ENCODE measurements at regions of chr12 and their contacts with region 1.

Region 1: GRCh38 chr12:123983822-123984485 is 10.9 kb downstream of the ZNF664 start:
- DNase-seq: no peak
- ATAC-seq: peak; percentile 66
- H3K4me3 Mint-ChIP-seq: no peak overlapping the region
- H3K27ac Mint-ChIP-seq: no peak overlapping the region
- H3K4me1 Mint-ChIP-seq: peaks cover 21% of the 10 kb centered on the region
- H3K27me3 Mint-ChIP-seq: no peaks in the 10 kb centered on the region
- CTCF ChIP-seq: no peak

Region 2: DNA sequence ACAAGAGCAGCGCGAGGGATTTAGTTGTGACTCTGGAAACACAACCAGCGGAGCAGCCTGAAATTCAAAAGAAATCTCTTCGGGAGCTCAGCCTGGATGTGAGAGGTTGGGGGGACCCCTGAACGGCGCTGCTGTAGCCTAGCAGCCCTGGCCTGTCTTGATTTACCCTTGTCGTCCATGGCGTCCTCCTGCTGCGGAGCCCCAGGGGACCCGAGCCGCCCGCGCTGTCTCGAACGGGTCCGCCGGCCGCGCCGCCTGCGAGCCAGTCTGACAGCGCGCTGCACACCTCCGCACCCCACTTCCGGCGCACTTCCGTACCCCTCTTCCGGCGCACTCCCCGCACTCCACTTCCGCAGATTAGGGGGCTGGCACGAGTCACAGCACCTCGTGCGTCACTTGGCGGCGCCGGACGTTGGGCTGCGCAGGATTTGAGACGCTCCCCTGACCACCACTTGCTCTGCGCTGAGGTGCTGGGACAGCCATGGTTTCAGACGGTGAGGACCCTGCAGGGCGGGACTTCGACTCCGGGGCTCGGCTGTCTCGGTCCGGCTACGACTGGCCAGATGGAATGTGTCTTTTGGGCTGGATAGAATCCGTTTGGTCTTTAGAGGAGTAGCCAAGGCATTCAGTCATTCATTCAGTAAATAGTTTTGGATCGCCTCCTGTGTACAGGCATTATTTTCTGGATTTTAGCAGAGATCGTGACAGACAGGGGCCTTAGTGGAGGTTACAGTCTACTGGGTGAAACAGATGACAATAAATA is 350.4 kb before region 1 on chr12 and contains the starts of genes EIF2B1 and GTF2H3:
- CTCF ChIA-PET with region 1: no interaction called
- POLR2A ChIA-PET with region 1: no interaction called
- intact Hi-C with region 1: loop called (anchors 10 kb)
- DNase-seq: peak; percentile 96
- ATAC-seq: peak; percentile 98
- H3K4me3 Mint-ChIP-seq: peak within 1 kb of the TSS; percentile 96
- H3K27ac Mint-ChIP-seq: peak within 1 kb of the TSS; percentile 93
- H3K4me1 Mint-ChIP-seq: peaks cover 24% of the 10 kb centered on the region
- H3K27me3 Mint-ChIP-seq: no peaks in the 10 kb centered on the region
- CTCF ChIP-seq: no peak
- total RNA-seq, gene EIF2B1: 67.3 and 79.7 TPM in 2 replicates
- total RNA-seq, gene GTF2H3: 33.8 and 36.2 TPM in 2 replicates

Region 3: DNA sequence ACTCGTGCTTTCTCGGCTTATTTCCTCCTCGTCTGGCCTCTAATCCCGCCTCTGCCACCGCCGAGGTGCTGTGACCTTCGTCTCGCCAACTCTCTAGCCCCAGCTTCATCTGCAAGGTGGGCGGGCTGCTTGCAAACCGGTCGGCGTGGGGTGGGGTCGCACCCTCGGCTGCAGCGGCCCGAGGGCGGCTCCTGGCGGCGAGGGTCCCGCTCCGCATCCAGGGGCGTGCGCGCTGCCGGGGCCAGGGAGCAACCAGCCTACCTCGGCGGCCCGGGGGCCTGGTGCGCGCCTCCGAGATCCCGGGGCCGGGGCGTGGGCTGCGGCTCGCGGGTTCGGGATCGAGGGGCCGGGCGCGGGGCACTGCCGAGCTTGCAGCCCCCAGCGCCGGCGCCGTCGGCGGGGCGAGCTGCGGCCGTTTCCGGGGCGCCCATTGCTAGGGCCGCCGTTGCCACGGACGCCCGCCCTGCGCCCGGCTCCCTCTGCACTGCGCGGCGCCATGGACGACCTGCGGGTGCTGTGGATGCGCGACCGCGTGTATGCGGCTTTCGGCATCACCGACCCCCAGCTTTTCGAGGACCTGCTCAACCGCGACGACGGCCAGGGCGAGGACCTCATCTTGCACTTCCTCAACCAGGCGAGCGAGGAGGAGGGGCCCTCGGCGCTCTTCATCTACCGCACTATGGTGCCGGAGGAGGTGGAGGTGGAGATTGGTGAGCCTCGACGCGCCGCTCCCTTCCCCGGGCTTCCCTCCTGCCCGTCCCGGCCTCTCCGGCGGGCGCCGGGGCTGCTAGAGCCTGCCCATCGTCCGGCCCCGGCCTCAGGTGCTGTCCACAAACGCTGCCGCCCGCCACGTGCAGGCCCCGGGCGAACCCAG is 221.9 kb before region 1 on chr12 and contains the start of gene DNAH10:
- CTCF ChIA-PET with region 1: no interaction called
- POLR2A ChIA-PET with region 1: no interaction called
- intact Hi-C with region 1: loop called (anchors 5 kb)
- DNase-seq: peak; percentile 61
- ATAC-seq: peak; percentile 82
- H3K4me3 Mint-ChIP-seq: peak within 1 kb of the TSS; percentile 91
- H3K27ac Mint-ChIP-seq: peak within 1 kb of the TSS; percentile 77
- H3K4me1 Mint-ChIP-seq: peaks cover 14% of the 10 kb centered on the region
- H3K27me3 Mint-ChIP-seq: no peaks in the 10 kb centered on the region
- CTCF ChIP-seq: no peak
- total RNA-seq, gene DNAH10: 0.32 and 0.51 TPM in 2 replicates

Region 4: DNA sequence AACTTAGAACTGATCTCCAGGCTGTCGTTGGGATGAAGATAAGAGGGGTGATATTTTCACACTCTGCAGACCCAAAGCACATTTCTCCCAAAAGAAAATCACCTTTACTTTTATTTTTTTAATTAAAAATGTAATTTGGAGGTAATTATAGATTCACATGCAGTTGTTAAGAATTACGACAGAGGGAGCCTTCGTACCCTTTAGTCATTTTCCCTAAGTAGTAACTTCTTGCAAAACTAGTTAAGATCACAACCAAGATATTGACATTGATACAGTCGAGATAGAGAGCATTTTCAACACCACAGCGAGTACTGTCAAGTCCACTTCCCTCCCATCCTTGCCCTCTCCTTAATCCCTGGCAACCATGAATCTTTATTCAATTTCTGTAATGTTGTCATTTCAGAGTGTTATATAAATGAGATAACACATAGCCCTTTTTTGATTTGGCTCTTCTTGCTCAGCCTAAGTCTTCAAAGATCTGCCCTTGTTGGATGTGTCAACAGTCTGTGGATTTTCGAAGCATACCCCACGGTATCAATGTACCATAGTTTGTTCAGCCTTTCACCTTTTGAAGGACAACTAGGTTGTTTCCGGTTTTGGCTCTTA is 182.3 kb before region 1 on chr12:
- CTCF ChIA-PET with region 1: no interaction called
- POLR2A ChIA-PET with region 1: no interaction called
- intact Hi-C with region 1: loop called (anchors 2 kb)
- DNase-seq: no peak
- ATAC-seq: no peak
- H3K4me3 Mint-ChIP-seq: no peak overlapping the region
- H3K27ac Mint-ChIP-seq: no peak overlapping the region
- H3K4me1 Mint-ChIP-seq: no peaks in the 10 kb centered on the region
- H3K27me3 Mint-ChIP-seq: no peaks in the 10 kb centered on the region
- CTCF ChIP-seq: no peak

Region 5: GRCh38 chr12:123905319-123905925 is 78.5 kb before region 1 on chr12:
- CTCF ChIA-PET with region 1: interaction called, 34 read pairs
- POLR2A ChIA-PET with region 1: no interaction called
- intact Hi-C with region 1: loop called (anchors 1 kb)
- DNase-seq: no peak
- ATAC-seq: peak; percentile 64
- H3K4me3 Mint-ChIP-seq: no peak overlapping the region
- H3K27ac Mint-ChIP-seq: peak overlapping the region; percentile 43
- H3K4me1 Mint-ChIP-seq: peaks cover 5% of the 10 kb centered on the region
- H3K27me3 Mint-ChIP-seq: peaks cover 14% of the 10 kb centered on the region
- CTCF ChIP-seq: peak; percentile 33